ENCODE measurements at regions of chr2 and their contacts with region 1.

Region 1: DNA sequence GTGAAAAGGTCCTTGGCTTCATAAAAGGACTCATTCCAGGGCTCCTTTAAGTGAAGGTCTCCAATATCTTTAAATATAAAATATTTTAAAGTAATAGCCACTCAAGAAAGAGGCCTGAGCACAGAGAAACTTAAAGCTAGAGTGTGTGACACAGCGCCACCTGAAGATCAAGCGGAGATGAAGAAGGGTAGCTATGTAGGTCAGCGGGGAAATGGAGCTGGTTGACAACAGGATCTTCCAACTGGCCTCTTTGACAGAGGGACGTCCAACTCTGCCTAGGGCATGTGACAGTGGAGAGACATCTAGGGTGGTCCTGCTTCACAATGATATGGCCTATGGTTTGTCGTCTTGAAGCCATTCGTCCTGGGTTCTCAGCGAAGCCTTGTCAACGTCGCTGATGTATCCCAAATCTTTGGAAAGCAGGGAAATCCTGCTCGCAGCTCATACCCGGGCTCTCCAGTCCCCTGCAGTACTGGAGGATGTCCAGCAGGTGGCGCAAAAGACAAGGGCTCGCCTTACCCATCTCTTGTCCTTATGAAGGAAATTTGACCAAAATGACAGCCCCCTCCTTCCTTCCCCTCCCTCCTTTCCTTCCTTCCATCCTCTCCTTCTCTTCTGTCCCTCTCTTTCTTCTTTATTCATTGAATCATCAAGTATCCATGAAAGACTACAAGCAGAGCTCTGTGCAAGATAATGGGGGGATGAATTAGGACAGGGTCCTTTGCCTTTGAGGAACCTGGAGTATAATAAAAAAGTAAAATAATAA is 59.6 kb downstream of the LONRF2 start:
- DNase-seq: peak; percentile 58 to 74
- H3K4me3 ChIP-seq: no peak overlapping the region
- H3K27ac ChIP-seq: no peak overlapping the region
- H3K4me1 ChIP-seq: no peaks in the 10 kb centered on the region
- H3K27me3 ChIP-seq: no peaks in the 10 kb centered on the region
- CTCF ChIP-seq: peak; percentile 90 to 98 (median 94)
- POLR2A ChIP-seq: no peak

Region 2: GRCh38 chr2:99922664-99923063 is 340.1 kb before region 1 on chr2:
- intact Hi-C with region 1: no loop called
- DNase-seq: no peak
- H3K4me3 ChIP-seq: no peak overlapping the region
- H3K27ac ChIP-seq: no peak overlapping the region
- H3K4me1 ChIP-seq: no peaks in the 10 kb centered on the region
- H3K27me3 ChIP-seq: no peaks in the 10 kb centered on the region
- CTCF ChIP-seq: no peak
- POLR2A ChIP-seq: no peak

Region 3: DNA sequence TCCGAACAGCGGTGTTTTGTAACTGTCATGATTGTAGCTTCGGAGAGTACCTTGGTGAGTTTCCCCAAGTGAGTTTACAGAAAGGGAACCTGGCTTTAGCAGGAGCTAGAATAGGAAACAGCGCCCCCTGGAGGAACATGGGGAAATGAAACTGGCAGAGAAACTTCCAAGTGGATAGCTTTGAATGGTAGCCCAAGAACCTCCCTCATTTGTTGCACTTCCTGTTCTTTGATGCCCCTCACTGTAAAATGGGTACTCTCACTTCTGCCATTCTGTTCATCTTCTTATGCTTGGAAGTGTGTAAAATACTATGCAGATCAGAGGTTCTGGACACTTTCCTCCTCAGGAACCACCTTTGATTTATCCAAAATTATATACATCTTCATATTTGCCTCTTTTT is 118.5 kb after region 1 on chr2:
- intact Hi-C with region 1: loop called (anchors 2 kb)
- DNase-seq: peak; percentile 83 to 90
- H3K4me3 ChIP-seq: no peak overlapping the region
- H3K27ac ChIP-seq: no peak overlapping the region
- H3K4me1 ChIP-seq: no peaks in the 10 kb centered on the region
- H3K27me3 ChIP-seq: no peaks in the 10 kb centered on the region
- CTCF ChIP-seq: peak; percentile 68 to 92 (median 88)
- POLR2A ChIP-seq: no peak